ENCODE measurements at regions of chr22 and their contacts with region 1.

Region 1: GRCh38 chr22:37199103-37199759 is 11.2 kb upstream of the C1QTNF6 start:
- DNase-seq: peak; percentile 89 to 99
- H3K4me3 ChIP-seq: peak overlapping the region; percentile 70 to 78
- H3K27ac ChIP-seq: peak overlapping the region; percentile 88 to 92
- H3K4me1 ChIP-seq: peaks cover 15 to 26% of the 10 kb centered on the region in 2 donors
- H3K27me3 ChIP-seq: no peaks in the 10 kb centered on the region
- CTCF ChIP-seq: peak; percentile 90 to 96 (median 93)

Region 2: GRCh38 chr22:37051391-37052385 is 147.5 kb before region 1 on chr22 and contains the start of gene KCTD17:
- intact Hi-C with region 1: loop called (anchors 1 kb)
- DNase-seq: peak in 1 of 2 donors; percentile 83
- H3K4me3 ChIP-seq: peak within 1 kb of the TSS; percentile 87 to 95
- H3K27ac ChIP-seq: no peak within 1 kb of the TSS
- H3K4me1 ChIP-seq: peaks cover 6 to 8% of the 10 kb centered on the region in 2 donors
- H3K27me3 ChIP-seq: no peaks in the 10 kb centered on the region
- CTCF ChIP-seq: no peak
- total RNA-seq, gene KCTD17: 34.9 TPM

Region 3: GRCh38 chr22:37166675-37167066 is 32.6 kb before region 1 on chr22:
- intact Hi-C with region 1: loop called (anchors 1 kb)
- DNase-seq: peak in 1 of 2 donors; percentile 89
- H3K4me3 ChIP-seq: peak overlapping the region in 1 of 2 donors; percentile 43
- H3K27ac ChIP-seq: no peak overlapping the region
- H3K4me1 ChIP-seq: peaks cover 0 to 9% of the 10 kb centered on the region in 2 donors
- H3K27me3 ChIP-seq: no peaks in the 10 kb centered on the region
- CTCF ChIP-seq: peak; percentile 79 to 95 (median 91)

Region 4: GRCh38 chr22:37431801-37432707 is 232.8 kb after region 1 on chr22:
- intact Hi-C with region 1: no loop called
- DNase-seq: no peak
- H3K4me3 ChIP-seq: no peak overlapping the region
- H3K27ac ChIP-seq: no peak overlapping the region
- H3K4me1 ChIP-seq: peaks cover 0 to 4% of the 10 kb centered on the region in 2 donors
- H3K27me3 ChIP-seq: peaks cover 20% of the 10 kb centered on the region
- CTCF ChIP-seq: no peak

Measured in ascending aorta (tissue), 2 donors.